ENCODE measurements at regions of chr9 and their contacts with region 1.

Region 1: DNA sequence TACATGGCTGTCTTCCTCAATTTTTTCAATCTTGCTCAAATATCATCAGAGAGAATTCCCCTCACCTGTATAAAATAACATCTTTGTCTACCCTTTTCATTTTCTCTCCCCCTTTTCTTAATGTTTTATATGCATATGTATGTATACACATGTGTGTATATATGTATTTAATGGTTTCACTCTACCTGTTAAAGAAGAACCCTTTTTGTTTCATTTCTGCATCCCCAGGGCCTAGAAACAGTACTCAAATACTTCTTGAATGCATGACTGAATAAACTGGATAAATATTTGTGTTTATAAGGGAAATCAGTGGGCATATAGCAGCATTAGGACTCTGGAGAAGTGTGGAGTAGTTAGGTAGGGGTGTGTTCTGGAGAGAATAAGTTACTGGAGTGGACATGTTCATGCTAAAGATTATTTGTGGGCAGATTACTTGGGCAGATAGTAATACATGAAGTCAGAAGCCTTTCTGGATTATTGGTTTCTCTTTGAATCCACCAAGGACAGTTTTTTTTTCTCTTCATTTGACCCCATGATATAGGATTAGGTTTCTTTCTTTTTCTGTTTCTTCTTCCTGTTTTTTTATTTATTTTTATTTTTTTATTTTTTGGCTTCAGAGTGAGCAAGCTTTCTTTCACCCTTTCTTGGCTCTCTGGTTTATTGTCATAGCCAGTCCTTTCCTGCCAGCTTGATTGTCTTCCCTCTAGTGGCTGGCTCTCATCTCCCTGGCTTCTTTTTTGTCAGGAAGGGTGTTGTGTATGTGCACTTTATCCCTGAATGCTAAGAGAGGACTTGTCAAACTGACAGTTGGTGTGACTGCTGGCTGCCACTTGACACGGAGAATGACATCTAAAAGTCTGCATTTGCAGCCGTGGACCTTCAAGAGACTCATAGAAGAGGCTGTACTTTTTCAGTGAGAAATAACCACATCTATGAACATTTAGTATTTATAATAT is 89.3 kb downstream of the ZCCHC7 start:
- DNase-seq: peak; percentile 51
- H3K4me3 ChIP-seq: peak overlapping the region; percentile 39
- H3K27ac ChIP-seq: peak overlapping the region; percentile 86
- H3K4me1 ChIP-seq: peaks cover 99% of the 10 kb centered on the region
- CTCF ChIP-seq: peak; percentile 69

Region 2: GRCh38 chr9:37221489-37222106 is 11.9 kb after region 1 on chr9:
- CTCF ChIA-PET with region 1: no interaction called
- POLR2A ChIA-PET with region 1: interaction called, 18 read pairs
- intact Hi-C with region 1: no loop called
- DNase-seq: no peak
- H3K4me3 ChIP-seq: no peak overlapping the region
- H3K27ac ChIP-seq: no peak overlapping the region
- H3K4me1 ChIP-seq: no peaks in the 10 kb centered on the region
- CTCF ChIP-seq: no peak